HEK293 (cell line): ENCODE measurements at regions of chr17 and their contacts with region 1.

Region 1: GRCh38 chr17:43760254-43760852 is 1.8 kb upstream of the SOST start:
- H3K4me3 ChIP-seq: no peak overlapping the region
- H3K27ac ChIP-seq: no peak overlapping the region
- H3K4me1 ChIP-seq: peaks cover 2% of the 10 kb centered on the region; the same call in 1 of the 2 replicates
- CTCF ChIP-seq: peak; percentile 100

Region 2: GRCh38 chr17:43634591-43635125 is 125.7 kb before region 1 on chr17:
- CTCF ChIA-PET with region 1: interaction called, 11 read pairs
- POLR2A ChIA-PET with region 1: no interaction called
- H3K4me3 ChIP-seq: no peak overlapping the region
- H3K27ac ChIP-seq: no peak overlapping the region
- H3K4me1 ChIP-seq: no peaks in the 10 kb centered on the region
- CTCF ChIP-seq: no peak

Region 3: DNA sequence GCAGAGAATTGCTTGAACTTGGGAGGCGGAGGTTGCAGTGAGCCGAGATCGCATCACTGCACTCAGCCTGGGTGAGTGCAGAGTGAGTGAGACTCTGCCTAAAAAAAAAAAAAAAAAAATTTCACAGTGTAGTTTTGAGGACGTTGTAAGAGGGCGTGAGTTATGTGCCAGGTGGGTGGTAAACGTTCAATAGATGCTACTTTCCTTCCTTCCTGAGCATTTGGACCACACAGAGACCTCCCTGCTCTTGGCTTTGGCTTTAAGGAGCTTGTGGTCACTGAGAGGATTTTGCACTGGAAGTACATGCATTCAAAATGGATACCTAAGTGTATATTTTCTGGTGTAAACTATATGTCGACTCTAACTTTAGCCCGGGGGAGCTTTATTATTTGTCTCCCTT is 32.3 kb before region 1 on chr17:
- CTCF ChIA-PET with region 1: interaction called, 10 read pairs
- POLR2A ChIA-PET with region 1: no interaction called
- H3K4me3 ChIP-seq: no peak overlapping the region
- H3K27ac ChIP-seq: no peak overlapping the region
- H3K4me1 ChIP-seq: peaks cover 4% of the 10 kb centered on the region
- CTCF ChIP-seq: no peak

Region 4: DNA sequence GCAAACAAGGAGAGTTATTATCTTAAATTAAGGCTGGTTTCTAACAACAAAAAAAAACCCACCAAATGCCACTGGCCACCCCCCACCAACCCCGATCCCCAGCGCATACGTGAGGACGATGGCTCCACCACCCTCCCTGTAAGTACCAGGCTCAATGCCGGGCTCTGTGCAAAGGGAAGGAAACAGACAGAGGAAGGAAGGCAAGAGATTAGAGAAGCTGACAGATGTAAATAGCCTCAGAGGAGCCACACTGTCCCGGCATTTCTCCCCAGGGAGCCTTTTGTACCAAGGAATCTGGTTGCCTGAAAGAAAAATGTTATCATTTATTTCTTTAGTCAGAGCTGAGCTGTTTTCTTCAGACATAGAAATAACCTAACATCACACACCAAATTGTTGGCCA is 14.8 kb before region 1 on chr17:
- CTCF ChIA-PET with region 1: interaction called, 37 read pairs
- POLR2A ChIA-PET with region 1: no interaction called
- H3K4me3 ChIP-seq: no peak overlapping the region
- H3K27ac ChIP-seq: no peak overlapping the region
- H3K4me1 ChIP-seq: no peaks in the 10 kb centered on the region; the same call in 1 of the 2 replicates
- CTCF ChIP-seq: no peak